Panc1 (cell line): ENCODE measurements at regions of chr4 and their contacts with region 1.

Region 1: GRCh38 chr4:16591272-16591826 is 307.1 kb downstream of the LDB2 start:
- DNase-seq: no peak
- ATAC-seq: no peak
- H3K4me3 ChIP-seq: no peak overlapping the region
- H3K27ac ChIP-seq: no peak overlapping the region
- H3K4me1 ChIP-seq: no peaks in the 10 kb centered on the region
- H3K27me3 ChIP-seq: no peaks in the 10 kb centered on the region
- CTCF ChIP-seq: no peak

Region 2: GRCh38 chr4:16450724-16451123 is 140.6 kb before region 1 on chr4:
- CTCF ChIA-PET with region 1: no interaction called
- POLR2A ChIA-PET with region 1: no interaction called
- in situ Hi-C with region 1: no loop called
- intact Hi-C with region 1: loop called (anchors 5 kb)
- DNase-seq: no peak
- ATAC-seq: no peak
- H3K4me3 ChIP-seq: no peak overlapping the region
- H3K27ac ChIP-seq: no peak overlapping the region
- H3K4me1 ChIP-seq: no peaks in the 10 kb centered on the region
- H3K27me3 ChIP-seq: no peaks in the 10 kb centered on the region
- CTCF ChIP-seq: no peak